ENCODE measurements at regions of chr2 and their contacts with region 1.

Region 1: DNA sequence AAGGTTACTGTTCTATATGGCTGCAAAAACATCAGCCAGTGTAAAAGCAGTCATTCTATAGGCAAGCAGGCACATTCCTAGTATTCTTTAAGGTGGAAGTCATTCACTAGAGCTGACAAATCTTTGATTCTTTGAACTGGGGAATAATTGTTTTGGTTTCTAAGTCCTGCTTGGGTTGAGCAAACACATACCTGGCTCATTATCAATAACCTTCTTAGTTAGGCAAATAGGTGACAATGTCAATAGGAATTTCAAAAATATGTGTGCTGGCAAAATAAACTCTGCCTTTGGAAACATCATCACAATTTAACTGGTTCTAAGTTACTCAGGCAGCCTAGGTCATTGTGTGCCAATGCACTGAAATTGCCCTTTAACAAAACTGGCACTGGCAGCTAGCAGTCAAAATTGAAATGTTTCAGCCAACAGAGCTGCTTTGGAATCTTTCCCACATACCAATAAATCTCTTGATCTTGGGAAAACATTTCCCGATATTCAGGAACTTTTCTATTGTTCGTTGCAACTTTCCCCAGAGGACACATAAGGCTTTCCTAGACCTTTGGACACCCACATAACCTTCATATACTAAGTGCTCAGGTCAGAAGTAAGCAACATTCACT is 402.0 kb upstream of the MMADHC start:
- DNase-seq: peak; percentile 58
- ATAC-seq: peak; percentile 92
- H3K4me3 ChIP-seq: no peak overlapping the region
- H3K27ac ChIP-seq: peak overlapping the region; percentile 79
- H3K4me1 ChIP-seq: peaks cover 16% of the 10 kb centered on the region
- H3K27me3 ChIP-seq: no peaks in the 10 kb centered on the region
- CTCF ChIP-seq: no peak

Region 2: GRCh38 chr2:149573760-149574159 is 415.8 kb before region 1 on chr2:
- CTCF ChIA-PET with region 1: no interaction called
- POLR2A ChIA-PET with region 1: interaction called, 12 read pairs
- in situ Hi-C with region 1: no loop called
- intact Hi-C with region 1: no loop called
- DNase-seq: no peak
- ATAC-seq: no peak
- H3K4me3 ChIP-seq: no peak overlapping the region
- H3K27ac ChIP-seq: no peak overlapping the region
- H3K4me1 ChIP-seq: no peaks in the 10 kb centered on the region
- H3K27me3 ChIP-seq: no peaks in the 10 kb centered on the region
- CTCF ChIP-seq: peak; percentile 38; the same call in 1 of the 2 replicates

Measured in Panc1 (cell line).